ENCODE measurements at regions of chr1 and their contacts with region 1.

Region 1: GRCh38 chr1:246506674-246507481 is at the start of gene SMYD3:
- DNase-seq: peak; percentile 82
- H3K4me3 Mint-ChIP-seq: peak within 1 kb of the TSS; percentile 100
- H3K27ac Mint-ChIP-seq: peak within 1 kb of the TSS; percentile 79
- H3K4me1 Mint-ChIP-seq: peaks cover 42% of the 10 kb centered on the region
- H3K27me3 Mint-ChIP-seq: no peaks in the 10 kb centered on the region
- CTCF ChIP-seq: no peak
- total RNA-seq, gene SMYD3: 34.2 and 35.1 TPM in 2 replicates

Region 2: GRCh38 chr1:246608616-246609376 is 101.9 kb after region 1 on chr1:
- CTCF ChIA-PET with region 1: no interaction called
- intact Hi-C with region 1: loop called (anchors 5 kb)
- DNase-seq: peak; percentile 92
- H3K4me3 Mint-ChIP-seq: peak overlapping the region; percentile 49
- H3K27ac Mint-ChIP-seq: peak overlapping the region; percentile 85
- H3K4me1 Mint-ChIP-seq: peaks cover 20% of the 10 kb centered on the region
- H3K27me3 Mint-ChIP-seq: no peaks in the 10 kb centered on the region
- CTCF ChIP-seq: peak; percentile 38

Measured in Calu3 (cell line).